RWPE1 (cell line): ENCODE measurements at regions of chr20 and their contacts with region 1.

Region 1: GRCh38 chr20:35303735-35304491 is 11.7 kb upstream of the FAM83C start:
- DNase-seq: peak; percentile 92
- H3K27ac ChIP-seq: peak overlapping the region; percentile 100
- CTCF ChIP-seq: peak; percentile 100

Region 2: DNA sequence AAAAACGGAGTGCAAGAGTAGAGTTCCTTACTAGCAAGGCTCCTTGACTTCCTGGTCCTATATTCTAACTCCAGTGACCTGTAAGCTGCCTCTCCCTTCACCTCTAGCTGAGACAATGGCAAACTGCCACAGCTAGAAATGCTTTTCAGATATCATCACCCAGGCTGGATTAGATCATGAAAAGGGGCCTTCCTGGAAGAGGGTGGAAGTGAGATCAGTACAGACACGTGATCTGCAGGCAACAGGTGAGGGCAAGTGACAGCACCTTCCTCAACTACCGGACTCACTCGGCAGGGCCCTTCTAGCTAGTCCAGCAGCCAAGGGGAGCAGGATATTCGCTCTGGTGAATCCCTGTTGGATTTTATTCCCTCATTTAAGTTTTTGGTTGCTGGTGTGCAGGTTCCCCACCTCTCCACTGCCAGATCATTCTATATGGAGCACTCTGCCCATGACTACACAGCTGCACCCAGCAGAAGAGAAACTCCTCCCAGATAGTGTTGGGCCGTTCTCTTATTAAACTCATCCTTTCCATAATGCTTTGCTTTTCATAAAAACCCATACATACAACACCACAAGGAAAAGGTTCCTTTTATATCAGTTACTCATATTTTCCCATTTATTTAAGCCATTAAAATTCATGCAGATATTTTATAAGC is 14.7 kb after region 1 on chr20:
- CTCF ChIA-PET with region 1: interaction called, 20 read pairs
- POLR2A ChIA-PET with region 1: interaction called, 4 read pairs
- DNase-seq: peak; percentile 99
- H3K27ac ChIP-seq: peak overlapping the region; percentile 85
- CTCF ChIP-seq: no peak

Region 3: GRCh38 chr20:35432430-35432735 is 128.5 kb after region 1 on chr20:
- CTCF ChIA-PET with region 1: interaction called, 11 read pairs
- POLR2A ChIA-PET with region 1: no interaction called
- DNase-seq: no peak
- H3K27ac ChIP-seq: peak overlapping the region; percentile 2; the same call in 1 of the 2 replicates
- CTCF ChIP-seq: no peak

Region 4: DNA sequence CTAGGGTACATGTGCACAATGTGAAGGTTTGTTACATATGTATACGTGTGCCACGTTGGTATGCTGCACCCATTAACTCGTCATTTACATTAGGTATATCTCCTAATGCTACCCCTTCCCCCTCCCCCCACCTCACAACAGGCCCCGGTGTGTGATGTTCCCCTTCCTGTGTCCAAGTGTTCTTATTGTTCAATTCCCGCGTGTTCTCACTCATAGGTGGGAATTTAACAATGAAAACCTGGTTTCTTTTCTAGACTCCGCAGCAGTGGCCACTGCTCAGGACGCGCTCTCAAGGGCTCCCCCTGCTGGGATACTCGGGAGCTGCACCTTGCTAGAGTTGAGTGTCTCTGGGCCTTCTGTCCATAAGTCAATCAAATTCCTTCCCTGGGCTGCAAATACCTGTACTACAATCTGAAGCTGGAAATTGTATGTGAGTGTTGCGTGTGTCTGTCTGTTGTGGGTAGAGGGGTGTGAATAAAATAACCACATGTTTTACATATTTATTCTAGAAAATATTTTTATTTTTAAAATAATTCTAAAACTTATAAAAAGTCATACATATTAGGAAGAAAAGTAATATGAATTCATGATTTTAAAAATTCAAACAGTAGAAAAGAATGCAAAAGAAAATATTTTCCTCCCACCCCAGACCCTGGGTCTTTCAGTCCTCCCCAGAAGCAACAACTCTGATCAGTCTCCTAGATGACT is 143.3 kb after region 1 on chr20:
- CTCF ChIA-PET with region 1: interaction called, 49 read pairs
- POLR2A ChIA-PET with region 1: no interaction called
- DNase-seq: peak; percentile 90
- H3K27ac ChIP-seq: peak overlapping the region; percentile 65
- CTCF ChIP-seq: peak; percentile 100

Region 5: DNA sequence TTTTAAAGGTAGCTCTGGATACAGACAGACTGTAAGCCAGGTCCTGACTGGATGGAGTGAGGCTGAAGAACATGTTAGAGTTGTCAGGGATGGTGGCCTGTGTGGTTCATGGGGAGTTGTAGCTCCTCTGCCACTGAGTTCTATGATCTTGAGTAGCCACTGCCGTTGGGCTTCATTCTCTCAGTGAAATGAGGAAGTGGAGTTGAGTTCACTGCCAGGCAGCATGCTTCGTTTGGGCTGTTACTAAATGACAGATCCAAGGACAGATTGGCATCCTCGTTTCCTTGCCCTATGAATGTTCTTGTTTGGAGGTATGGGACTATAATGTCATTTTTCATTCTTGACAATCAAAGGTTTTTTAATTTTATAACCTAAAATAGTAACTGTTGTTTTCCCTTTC is 613.2 kb after region 1 on chr20:
- CTCF ChIA-PET with region 1: interaction called, 10 read pairs
- POLR2A ChIA-PET with region 1: no interaction called
- DNase-seq: no peak
- H3K27ac ChIP-seq: no peak overlapping the region
- CTCF ChIP-seq: no peak